ENCODE measurements at regions of chr17 and their contacts with region 1.

Region 1: GRCh38 chr17:38667099-38667786 is 7.5 kb downstream of the EPOP start:
- DNase-seq: peak; percentile 60 to 83 (median 71)
- H3K4me3 ChIP-seq: no peak overlapping the region
- H3K27ac ChIP-seq: no peak overlapping the region
- H3K4me1 ChIP-seq: no peaks in the 10 kb centered on the region
- H3K27me3 ChIP-seq: peaks cover 4% of the 10 kb centered on the region
- CTCF ChIP-seq: peak; percentile 95 to 99 (median 98)
- POLR2A ChIP-seq: no peak

Region 2: DNA sequence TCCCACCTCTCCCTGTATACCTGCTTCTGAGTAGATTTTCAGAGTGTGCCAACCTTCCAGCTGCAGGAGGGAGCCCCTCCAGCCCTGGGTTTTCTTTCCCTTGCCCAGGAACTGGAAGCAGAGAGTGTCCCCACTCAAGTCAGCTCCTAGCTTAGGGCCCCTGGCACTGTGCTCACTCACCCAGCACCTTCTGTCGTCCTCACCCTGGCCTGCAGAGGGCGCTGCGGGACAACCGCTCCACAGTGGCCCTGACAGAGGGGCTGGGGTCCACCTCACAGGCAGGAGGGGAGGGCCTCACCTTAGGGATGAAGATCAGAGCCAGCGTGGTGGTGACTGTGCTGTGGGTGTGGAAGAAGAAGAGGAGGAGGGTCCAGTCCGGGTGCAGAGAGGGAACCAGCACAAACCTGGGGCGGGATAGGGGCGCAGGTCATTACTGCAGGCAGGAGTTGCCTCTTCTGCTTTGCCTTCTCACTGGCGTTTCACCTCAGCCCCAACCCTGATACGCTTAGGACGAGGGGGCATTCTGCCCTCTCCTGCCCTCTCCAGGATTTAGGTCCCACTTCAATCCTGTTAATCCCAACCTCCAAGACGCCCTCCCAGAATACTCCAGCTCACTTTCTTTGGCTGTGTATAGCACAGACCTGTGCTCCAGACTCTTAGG is 333.5 kb before region 1 on chr17:
- intact Hi-C with region 1: loop called in 1 of 2 experiments (anchors 10 kb)
- DNase-seq: peak in 3 of 7 donors; percentile 31 to 43 (median 43)
- H3K4me3 ChIP-seq: no peak overlapping the region
- H3K27ac ChIP-seq: no peak overlapping the region
- H3K4me1 ChIP-seq: no peaks in the 10 kb centered on the region
- H3K27me3 ChIP-seq: peaks cover 8% of the 10 kb centered on the region
- CTCF ChIP-seq: peak in 5 of 6 experiments; percentile 15 to 39 (median 35)
- POLR2A ChIP-seq: no peak

Region 3: DNA sequence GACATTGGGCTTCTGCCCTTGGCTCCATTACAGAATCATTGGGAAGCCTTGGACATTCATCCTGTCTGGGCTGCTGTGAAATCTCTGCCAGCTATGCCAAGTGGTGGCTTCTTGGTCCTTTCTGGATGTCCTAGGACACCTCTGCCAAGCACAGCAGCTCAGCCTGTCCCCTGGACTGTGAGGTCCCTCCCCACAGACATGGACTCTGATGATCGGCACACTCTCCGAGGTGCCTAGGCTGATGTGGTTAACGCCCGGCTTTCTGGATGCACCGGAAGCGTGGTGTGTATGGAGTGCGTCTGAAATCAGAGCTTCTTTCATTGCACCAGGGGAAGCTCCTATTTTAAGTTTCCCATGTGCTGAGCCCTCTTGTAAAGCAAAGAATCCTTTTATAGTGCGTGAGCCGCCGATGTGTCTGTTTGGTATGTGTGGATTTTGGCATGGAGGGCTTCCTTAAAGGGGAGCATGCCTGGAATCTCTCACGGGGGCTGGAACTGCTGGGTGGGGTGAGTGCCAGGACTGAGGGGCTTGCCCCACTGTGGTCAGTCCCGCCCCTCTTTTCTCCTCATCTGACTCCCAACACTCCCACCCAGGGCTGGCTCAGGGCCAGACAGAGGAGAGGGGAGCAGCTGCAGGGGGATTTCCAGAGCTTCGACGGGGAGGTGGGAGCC is 245.9 kb before region 1 on chr17:
- intact Hi-C with region 1: loop called in 1 of 2 experiments (anchors 5 kb)
- DNase-seq: no peak
- H3K4me3 ChIP-seq: no peak overlapping the region
- H3K27ac ChIP-seq: no peak overlapping the region
- H3K4me1 ChIP-seq: peaks cover 8 to 16% of the 10 kb centered on the region in 2 donors
- H3K27me3 ChIP-seq: peaks cover 4% of the 10 kb centered on the region
- CTCF ChIP-seq: no peak
- POLR2A ChIP-seq: no peak

Region 4: DNA sequence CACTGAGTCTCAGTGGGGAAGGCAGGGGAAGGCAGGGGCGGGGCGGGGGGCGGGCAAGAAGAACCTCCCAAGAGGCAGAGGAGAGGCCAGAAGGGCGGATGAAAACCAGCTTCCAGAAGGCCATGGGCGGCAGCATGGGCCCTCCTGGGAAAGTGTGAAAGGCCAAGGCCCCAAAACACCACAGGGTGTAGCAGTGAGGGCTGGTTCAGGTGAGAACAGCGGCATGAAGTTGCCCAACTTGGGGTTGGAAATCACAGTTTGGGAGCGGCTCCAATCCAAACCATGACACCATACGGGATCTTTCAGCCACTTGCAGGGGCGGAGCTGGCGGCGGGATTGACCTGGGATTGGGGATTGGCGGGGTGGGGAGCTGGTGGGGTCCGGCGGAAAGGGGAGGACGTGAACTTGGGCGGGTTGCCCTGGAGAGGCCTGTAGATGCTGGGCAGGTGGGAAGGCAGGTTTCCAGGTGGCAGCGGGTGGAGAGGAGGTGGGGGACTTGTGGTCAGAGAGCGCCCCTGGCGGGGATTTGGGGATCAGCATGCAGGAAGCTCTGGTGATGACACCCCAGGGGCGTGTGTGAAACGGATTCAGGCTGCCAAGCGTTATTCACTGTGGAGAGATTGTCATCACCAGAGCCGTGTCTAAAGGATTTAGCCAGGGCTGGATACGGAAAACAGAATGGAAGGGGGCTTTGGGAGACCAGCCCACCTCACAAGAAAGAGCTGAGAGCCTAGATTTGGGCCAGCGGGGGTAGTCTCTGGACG is 158.1 kb before region 1 on chr17:
- intact Hi-C with region 1: loop called in 1 of 2 experiments (anchors 10 kb)
- DNase-seq: peak; percentile 67 to 89 (median 86)
- H3K4me3 ChIP-seq: no peak overlapping the region
- H3K27ac ChIP-seq: no peak overlapping the region
- H3K4me1 ChIP-seq: peaks cover 0 to 13% of the 10 kb centered on the region in 2 donors
- H3K27me3 ChIP-seq: no peaks in the 10 kb centered on the region
- CTCF ChIP-seq: peak; percentile 51 to 65 (median 62)
- POLR2A ChIP-seq: no peak

Region 5: DNA sequence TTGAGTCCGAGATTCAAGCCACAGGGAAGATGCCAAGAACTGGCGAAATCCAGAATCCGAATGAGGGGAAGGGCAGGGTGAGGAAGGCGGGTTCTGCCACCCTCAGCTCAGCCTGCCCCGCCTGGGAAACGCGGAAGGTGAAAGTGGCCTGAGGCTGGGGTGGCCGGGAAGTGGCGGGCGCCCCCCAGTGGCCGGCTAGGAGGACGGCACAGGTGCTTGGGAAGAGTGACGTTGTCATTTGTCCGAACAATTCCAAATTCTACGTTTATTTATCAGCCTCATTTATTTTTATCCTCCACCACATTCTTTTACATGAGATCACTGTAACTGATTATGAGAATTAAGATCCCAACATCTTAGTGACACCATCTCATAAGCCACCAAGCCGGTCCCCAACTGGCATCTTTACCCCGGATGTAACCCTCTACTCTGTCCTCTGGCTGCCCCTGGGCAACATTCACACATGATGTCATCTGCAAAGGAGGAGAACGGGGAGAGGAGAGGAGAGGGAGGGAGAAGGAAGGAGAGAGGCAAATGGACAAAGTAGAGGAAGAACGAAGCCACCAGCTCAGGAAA is 82.8 kb before region 1 on chr17:
- intact Hi-C with region 1: loop called in 1 of 2 experiments (anchors 10 kb)
- DNase-seq: peak; percentile 58 to 81 (median 65)
- H3K4me3 ChIP-seq: no peak overlapping the region
- H3K27ac ChIP-seq: peak overlapping the region in 1 of 5 donors; percentile 65
- H3K4me1 ChIP-seq: no peaks in the 10 kb centered on the region
- H3K27me3 ChIP-seq: peaks cover 24% of the 10 kb centered on the region
- CTCF ChIP-seq: peak; percentile 86 to 98 (median 90)
- POLR2A ChIP-seq: no peak

Region 6: DNA sequence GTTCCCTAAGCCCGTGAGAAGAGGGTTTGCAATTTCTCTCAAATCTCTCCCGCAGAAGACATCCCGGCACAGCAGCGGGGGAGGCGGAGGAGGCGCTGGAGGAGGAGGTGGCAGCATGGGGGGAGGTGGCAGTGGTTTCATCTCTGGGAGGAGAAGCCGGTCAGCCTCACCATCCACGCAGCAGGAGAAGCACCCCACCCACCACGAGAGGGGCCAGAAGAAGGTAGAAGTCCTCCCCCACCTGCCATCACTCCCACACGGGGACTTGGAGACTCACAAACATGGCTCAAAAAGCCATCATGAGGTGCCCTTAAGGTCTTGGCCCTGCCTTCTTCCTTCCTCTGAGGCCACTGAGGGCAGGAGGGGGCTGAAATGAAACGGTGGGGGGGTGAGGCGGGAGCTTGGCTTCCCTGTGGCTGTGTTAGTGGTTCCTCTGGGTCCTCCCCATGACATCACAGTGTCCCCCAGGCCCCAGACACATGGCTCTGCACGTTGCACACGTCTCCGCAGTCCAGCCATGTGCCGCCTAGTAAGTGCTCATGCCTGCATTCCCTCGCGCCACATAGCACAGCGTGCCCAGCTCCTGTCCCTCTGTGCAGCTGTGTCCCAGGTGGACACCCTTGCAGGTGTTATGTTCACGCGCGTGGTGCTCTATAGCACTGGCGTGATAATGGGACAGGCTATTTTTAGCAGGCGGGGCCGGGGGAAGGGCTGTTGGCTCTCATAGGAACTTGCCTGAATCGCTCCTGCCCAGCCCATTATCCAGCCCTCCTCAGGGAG is 44.7 kb after region 1 on chr17:
- intact Hi-C with region 1: no loop called
- DNase-seq: no peak
- H3K4me3 ChIP-seq: no peak overlapping the region
- H3K27ac ChIP-seq: no peak overlapping the region
- H3K4me1 ChIP-seq: peaks cover under 1 to 15% of the 10 kb centered on the region in 2 donors
- H3K27me3 ChIP-seq: no peaks in the 10 kb centered on the region
- CTCF ChIP-seq: no peak
- POLR2A ChIP-seq: no peak

Region 7: GRCh38 chr17:38912221-38912813 is 245.1 kb after region 1 on chr17:
- intact Hi-C with region 1: no loop called
- DNase-seq: peak in 6 of 7 donors; percentile 68 to 90 (median 84)
- H3K4me3 ChIP-seq: no peak overlapping the region
- H3K27ac ChIP-seq: peak overlapping the region in 3 of 5 donors; percentile 33 to 73 (median 47)
- H3K4me1 ChIP-seq: peaks cover 12 to 16% of the 10 kb centered on the region in 2 donors
- H3K27me3 ChIP-seq: no peaks in the 10 kb centered on the region
- CTCF ChIP-seq: no peak
- POLR2A ChIP-seq: no peak